ENCODE measurements at regions of chr1 and their contacts with region 1.

Region 1: GRCh38 chr1:23601071-23601967 is 42.0 kb upstream of the ID3 start:
- DNase-seq: no peak
- H3K4me3 ChIP-seq: no peak overlapping the region
- H3K27ac ChIP-seq: no peak overlapping the region
- H3K4me1 ChIP-seq: no peaks in the 10 kb centered on the region
- H3K27me3 ChIP-seq: no peaks in the 10 kb centered on the region
- CTCF ChIP-seq: no peak

Region 2: DNA sequence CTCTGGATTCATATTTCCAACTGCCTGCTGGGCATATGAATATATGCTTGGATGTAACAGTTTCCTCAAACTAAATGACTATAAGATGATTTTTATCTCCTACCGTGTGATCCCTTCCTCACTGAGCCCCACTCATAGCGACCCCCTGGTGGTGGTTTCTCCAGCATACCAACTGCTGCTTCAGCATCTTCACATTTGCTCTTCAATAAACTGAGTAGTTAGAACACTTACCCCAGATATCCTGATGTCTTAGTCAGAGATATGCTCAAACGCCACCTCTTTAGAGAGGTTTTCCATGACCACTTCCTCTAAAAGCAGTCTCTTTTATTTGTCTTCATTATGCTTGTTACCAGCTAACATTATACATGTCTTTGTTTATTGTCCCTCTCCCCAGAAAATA is 247.1 kb before region 1 on chr1:
- CTCF ChIA-PET with region 1: no interaction called
- dilution Hi-C with region 1: no loop called
- in situ Hi-C with region 1: no loop called
- intact Hi-C with region 1: no loop called
- DNase-seq: no peak
- H3K4me3 ChIP-seq: no peak overlapping the region
- H3K27ac ChIP-seq: no peak overlapping the region
- H3K4me1 ChIP-seq: no peaks in the 10 kb centered on the region
- H3K27me3 ChIP-seq: no peaks in the 10 kb centered on the region
- CTCF ChIP-seq: no peak

Region 3: DNA sequence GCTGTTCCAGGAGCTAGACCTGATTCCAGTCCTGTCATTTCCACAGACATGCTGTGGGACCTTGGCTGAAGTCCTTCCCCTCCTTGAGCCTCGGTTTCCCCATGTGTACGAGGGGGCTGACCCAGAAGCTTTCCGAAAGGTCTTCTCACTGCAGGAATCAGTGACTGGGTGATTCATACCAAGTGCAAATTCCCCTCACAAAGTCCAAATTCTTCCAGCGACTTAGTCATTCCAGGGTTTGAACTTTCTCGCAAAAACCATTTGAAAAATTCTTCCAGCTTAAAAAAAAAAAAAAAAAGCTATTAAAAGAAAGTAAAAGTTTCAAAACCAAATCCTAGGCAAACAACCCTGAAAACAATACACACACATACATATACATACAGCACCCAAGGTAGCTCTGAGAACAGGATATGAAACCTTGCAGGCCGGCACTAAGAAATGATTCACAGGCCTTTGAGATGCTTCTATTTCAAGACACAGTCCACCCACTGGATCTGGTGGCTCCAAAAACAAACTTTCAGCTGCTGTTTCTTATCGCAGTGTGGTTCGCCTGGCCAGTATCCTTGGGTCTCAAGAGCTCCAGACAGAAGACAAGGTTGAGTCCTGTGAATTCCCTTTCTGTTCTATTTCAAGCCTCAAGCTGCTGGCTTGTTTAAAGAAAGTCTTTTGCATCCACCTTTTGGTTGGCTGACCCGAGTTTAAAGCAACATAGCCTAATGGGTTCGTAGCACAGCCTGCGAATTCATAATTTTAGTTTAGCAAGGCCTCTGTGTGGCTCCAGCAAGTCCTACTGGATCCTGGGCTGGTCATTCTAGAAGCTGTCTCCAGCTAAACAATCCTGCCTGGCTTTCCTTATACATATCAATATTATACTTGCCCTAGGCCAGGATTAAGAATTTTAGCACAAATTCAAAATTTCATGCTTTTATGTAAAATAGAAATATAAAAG is 24.0 kb before region 1 on chr1:
- CTCF ChIA-PET with region 1: interaction called, 14 read pairs
- dilution Hi-C with region 1: no loop called
- in situ Hi-C with region 1: no loop called
- intact Hi-C with region 1: no loop called
- DNase-seq: peak; percentile 69
- H3K4me3 ChIP-seq: no peak overlapping the region
- H3K27ac ChIP-seq: peak overlapping the region; percentile 60
- H3K4me1 ChIP-seq: peaks cover 18% of the 10 kb centered on the region
- H3K27me3 ChIP-seq: no peaks in the 10 kb centered on the region
- CTCF ChIP-seq: no peak

Region 4: DNA sequence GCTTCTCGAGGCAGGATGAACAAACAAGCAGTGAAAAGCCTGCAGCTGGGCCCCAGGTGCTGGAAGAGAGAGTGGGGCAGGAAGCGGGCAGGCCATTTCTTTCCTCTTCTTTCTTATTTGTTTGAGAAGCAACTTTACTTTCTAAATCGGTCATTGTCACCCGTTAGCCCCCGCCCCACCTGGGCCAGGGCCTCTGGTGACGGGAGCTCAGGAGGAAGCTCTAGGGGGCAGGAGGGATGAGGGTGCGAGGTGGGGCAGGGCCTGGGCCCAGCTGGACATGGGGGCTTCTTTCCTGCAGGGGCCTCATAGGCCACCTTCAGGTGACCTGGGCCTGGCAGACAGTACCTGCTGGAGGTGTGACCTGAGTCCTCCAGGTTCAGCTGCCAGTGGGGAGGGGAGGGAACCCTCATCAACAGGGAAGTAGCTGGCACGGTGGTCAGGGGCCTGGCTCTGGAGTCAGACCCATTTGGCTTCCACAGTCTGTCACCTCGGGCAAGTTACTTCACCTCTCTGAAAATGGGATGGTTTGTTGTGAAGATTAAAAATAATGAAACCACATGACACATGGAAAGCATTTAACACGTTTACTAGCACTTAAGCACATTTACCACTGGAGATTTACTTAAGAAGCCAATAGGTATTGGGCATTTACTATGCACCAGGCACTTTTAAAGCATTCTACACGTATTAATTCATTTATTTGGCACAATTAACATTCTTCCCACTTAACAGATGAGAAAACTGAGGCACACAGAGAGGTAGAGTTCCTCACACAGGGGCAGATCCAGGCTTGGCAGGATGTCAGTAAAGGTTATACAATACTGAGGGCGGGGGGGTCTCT is 12.1 kb after region 1 on chr1:
- CTCF ChIA-PET with region 1: no interaction called
- dilution Hi-C with region 1: no loop called
- in situ Hi-C with region 1: no loop called
- intact Hi-C with region 1: no loop called
- DNase-seq: no peak
- H3K4me3 ChIP-seq: no peak overlapping the region
- H3K27ac ChIP-seq: no peak overlapping the region
- H3K4me1 ChIP-seq: no peaks in the 10 kb centered on the region
- H3K27me3 ChIP-seq: no peaks in the 10 kb centered on the region
- CTCF ChIP-seq: no peak

Measured in mammary epithelial cell (primary cell).